H1 (cell line): ENCODE measurements at regions of chr4 and their contacts with region 1.

Region 1: DNA sequence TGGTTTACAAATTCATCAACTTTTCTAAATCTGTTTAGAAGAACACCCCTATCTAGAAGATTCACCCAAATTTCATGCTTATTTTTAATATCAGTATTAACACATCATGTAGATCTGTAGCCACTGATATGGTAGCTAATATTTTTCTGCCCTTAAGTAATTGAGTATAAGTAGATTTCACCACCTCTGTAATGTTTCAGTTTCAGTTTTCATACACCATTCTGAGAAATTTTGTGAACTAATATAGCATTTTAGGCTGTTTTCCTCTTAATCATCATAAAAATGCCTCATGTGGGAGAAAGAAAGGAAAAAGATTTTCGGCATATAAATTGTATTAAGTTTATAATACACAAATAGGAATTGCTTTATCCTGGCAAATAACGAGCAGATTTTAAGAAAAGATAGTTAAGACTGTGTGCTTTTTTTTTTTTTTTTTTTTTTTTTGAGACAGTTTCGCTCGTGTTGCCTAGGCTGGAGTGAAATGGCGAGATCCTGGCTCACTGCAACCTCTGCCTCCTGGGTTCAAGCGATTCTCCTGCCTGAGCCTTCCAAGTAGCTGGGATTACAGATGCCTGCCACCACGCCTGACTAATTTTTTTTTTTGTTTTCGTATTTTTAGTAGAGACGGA is 21.4 kb upstream of the RBPJ start:
- DNase-seq: no peak
- H3K4me3 ChIP-seq: peak overlapping the region in 1 of 4 experiments; percentile 34; a peak in 1 of 8 replicates
- H3K27ac ChIP-seq: no peak overlapping the region
- H3K4me1 ChIP-seq: peaks cover 0 to 20% (median 10%) of the 10 kb centered on the region in 4 experiments; a peak in 5 of 7 replicates
- H3K27me3 ChIP-seq: no peaks in the 10 kb centered on the region
- CTCF ChIP-seq: no peak
- EP300 ChIP-seq: no peak
- POLR2A ChIP-seq: no peak
- RAD21 ChIP-seq: no peak

Region 2: DNA sequence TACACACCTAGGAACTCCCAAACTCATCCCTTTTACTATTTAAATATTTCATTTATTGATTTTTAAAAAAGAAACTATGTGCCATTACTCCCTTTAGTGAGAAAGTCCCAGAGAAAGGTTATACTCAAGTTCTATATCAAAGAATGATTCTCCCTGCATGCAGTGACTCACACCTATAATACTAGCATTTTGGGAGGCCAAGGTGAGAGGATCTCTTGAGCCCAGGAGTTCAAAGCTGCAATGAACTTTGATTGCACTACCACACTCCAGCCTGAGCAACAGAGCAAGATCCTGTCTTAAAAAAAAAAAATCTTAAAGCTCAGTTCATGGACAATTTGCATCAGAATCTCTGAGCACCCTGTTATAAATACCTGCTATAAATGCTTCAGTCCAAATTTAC is 12.3 kb after region 1 on chr4:
- CTCF ChIA-PET with region 1: interaction called, 11 read pairs
- POLR2A ChIA-PET with region 1: interaction called, 4 read pairs
- DNase-seq: no peak
- H3K4me3 ChIP-seq: no peak overlapping the region
- H3K27ac ChIP-seq: no peak overlapping the region
- H3K4me1 ChIP-seq: no peaks in the 10 kb centered on the region
- H3K27me3 ChIP-seq: no peaks in the 10 kb centered on the region
- CTCF ChIP-seq: no peak
- EP300 ChIP-seq: no peak
- POLR2A ChIP-seq: no peak
- RAD21 ChIP-seq: no peak

Region 3: DNA sequence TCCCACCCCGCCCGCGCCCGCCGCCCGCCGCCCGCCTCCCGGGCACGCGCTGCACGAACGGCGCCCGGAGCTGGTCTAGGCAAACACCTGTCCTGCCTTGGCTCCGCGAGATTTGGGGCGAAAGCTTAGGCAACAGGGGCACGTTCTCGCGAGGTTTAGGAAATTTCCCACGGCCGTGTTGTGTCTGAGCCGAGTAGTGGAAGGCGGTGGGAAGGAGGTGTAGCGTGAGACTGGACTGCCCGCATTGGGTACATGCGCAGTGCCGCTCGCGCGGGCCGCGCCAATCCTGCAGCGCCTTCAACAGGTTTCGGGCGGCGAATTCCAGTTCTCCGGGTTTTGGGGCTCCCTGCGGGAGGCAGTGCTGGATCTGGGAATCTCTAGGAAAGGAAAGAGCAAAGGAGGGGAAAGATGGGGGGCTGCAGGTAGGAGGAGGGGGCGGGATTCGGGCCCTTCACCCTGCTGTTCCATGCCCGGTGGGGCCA is 20.1 kb after region 1 on chr4:
- CTCF ChIA-PET with region 1: no interaction called
- POLR2A ChIA-PET with region 1: interaction called, 13 read pairs
- DNase-seq: peak; percentile 95 to 97
- H3K4me3 ChIP-seq: peak overlapping the region; percentile 87 to 98 (median 92)
- H3K27ac ChIP-seq: peak overlapping the region; percentile 87
- H3K4me1 ChIP-seq: peaks cover 0 to 4% (median 1%) of the 10 kb centered on the region in 4 experiments; a peak in 4 of 7 replicates
- H3K27me3 ChIP-seq: no peaks in the 10 kb centered on the region
- CTCF ChIP-seq: no peak
- EP300 ChIP-seq: 0 out of 3 replicates have a peak, but pooled peaks of 1 of the 2 experiments have one; percentile 5
- POLR2A ChIP-seq: no peak; a peak in 1 of 3 replicates
- RAD21 ChIP-seq: peak; percentile 3 to 30; a peak in 2 of 4 replicates